ENCODE measurements at regions of chr9 and their contacts with region 1.

Region 1: DNA sequence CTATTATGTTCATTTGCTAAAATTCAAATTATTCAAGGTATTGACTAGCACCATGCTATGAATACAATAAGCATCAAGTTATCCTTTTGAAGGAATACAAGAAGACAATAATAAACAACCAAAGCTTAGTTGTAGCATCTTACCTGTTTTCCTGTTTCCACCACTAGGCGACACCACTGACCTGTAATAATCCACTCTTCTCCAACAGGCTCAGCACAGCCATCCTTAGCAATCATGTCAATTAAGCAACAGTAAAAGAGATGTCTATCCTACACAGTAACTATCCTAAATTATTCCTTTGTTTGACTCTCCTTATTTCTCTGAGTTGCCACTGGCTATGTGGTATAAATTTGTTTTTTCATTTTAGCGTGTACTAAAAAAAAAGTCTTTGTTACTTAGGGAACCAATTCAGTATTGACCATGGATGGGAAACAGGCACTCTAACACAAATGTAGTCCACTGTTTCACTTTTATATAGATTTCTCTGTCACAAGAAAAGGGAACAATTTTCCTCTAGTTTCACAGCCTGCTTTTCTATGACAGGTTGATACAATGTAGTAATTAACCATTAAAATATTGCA is 46.2 kb downstream of the PCA3 start:
- DNase-seq: peak in 1 of 3 donors; percentile 82
- ATAC-seq: peak; percentile 86
- H3K4me3 ChIP-seq: no peak overlapping the region
- H3K4me1 ChIP-seq: no peaks in the 10 kb centered on the region
- CTCF ChIP-seq: peak; percentile 47

Region 2: DNA sequence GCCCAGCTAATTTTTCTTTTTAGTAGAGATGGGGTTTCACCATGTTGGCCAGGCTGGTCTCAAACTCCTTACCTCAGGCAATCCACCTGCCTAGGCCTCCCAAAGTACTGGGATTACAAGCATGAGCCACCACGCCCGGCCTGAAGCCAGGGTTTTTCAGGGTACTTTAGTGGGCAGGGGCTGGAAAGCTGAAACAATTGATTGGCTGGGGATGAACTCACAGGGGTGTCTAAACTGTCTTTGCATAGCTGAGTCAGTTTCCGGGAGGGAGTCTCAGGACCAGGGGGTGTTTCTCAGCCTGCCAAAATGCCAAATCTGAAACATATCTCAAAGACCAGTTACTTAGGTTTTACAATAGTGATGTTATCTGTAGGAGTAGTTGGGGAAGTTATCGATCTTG is 49.4 kb after region 1 on chr9:
- intact Hi-C with region 1: no loop called
- DNase-seq: no peak
- ATAC-seq: no peak
- H3K4me3 ChIP-seq: no peak overlapping the region
- H3K4me1 ChIP-seq: no peaks in the 10 kb centered on the region
- CTCF ChIP-seq: no peak

Region 3: GRCh38 chr9:76987594-76988200 is 177.2 kb after region 1 on chr9:
- intact Hi-C with region 1: loop called in 1 of 2 experiments (anchors 5 kb)
- DNase-seq: peak in 2 of 3 donors; percentile 34 to 66
- ATAC-seq: peak; percentile 94
- H3K4me3 ChIP-seq: no peak overlapping the region
- H3K4me1 ChIP-seq: no peaks in the 10 kb centered on the region
- CTCF ChIP-seq: peak; percentile 26

Region 4: GRCh38 chr9:77158772-77159513 is 348.5 kb after region 1 on chr9:
- intact Hi-C with region 1: loop called in 1 of 2 experiments (anchors 10 kb)
- DNase-seq: no peak
- ATAC-seq: no peak
- H3K4me3 ChIP-seq: no peak overlapping the region
- H3K4me1 ChIP-seq: peaks cover 3% of the 10 kb centered on the region
- CTCF ChIP-seq: no peak

Measured in mucosa of descending colon (tissue), 3 donors.